ENCODE measurements at regions of chr19 and their contacts with region 1.

Region 1: GRCh38 chr19:39557441-39558151 is 17.6 kb upstream of the EID2 start:
- DNase-seq: peak in 1 of 5 donors; percentile 15
- H3K4me3 ChIP-seq: peak overlapping the region; percentile 37 to 41
- H3K4me3 Mint-ChIP-seq: peak overlapping the region; percentile 79 to 93 (median 85)
- H3K27ac ChIP-seq: peak overlapping the region; percentile 16
- H3K27ac Mint-ChIP-seq: peak overlapping the region; percentile 77 to 99 (median 96)
- H3K4me1 ChIP-seq: peaks cover 23% of the 10 kb centered on the region
- H3K4me1 Mint-ChIP-seq: peaks cover 21 to 25% (median 22%) of the 10 kb centered on the region in 4 donors
- H3K27me3 ChIP-seq: no peaks in the 10 kb centered on the region
- H3K27me3 Mint-ChIP-seq: no peaks in the 10 kb centered on the region

Region 2: DNA sequence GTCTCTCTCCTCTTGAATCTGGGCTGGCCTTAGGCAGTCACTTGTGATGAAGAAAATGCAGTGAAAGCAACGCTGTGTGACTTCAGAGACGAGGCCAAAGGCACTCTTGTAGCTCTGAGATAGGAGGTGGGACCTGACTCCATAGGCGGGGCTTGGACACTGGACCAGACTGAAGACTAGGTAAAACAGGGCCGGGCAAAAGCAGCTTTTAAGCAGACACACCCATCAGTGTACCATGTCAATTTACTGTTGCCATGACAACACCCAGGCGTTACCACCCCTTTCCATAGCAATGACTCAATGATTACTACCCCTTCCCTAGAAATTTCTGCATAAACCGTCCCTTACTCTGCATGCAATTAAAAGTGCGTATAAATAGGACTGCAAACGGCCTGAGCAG is 11.0 kb before region 1 on chr19:
- CTCF ChIA-PET with region 1: interaction called, 14 read pairs
- POLR2A ChIA-PET with region 1: interaction called, 3 read pairs
- intact Hi-C with region 1: no loop called
- DNase-seq: no peak
- H3K4me3 ChIP-seq: no peak overlapping the region
- H3K4me3 Mint-ChIP-seq: peak overlapping the region in 2 of 8 donors; percentile 30 to 32
- H3K27ac ChIP-seq: no peak overlapping the region
- H3K27ac Mint-ChIP-seq: peak overlapping the region in 4 of 7 donors; percentile 47 to 82 (median 62)
- H3K4me1 ChIP-seq: peaks cover 45% of the 10 kb centered on the region
- H3K4me1 Mint-ChIP-seq: peaks cover 25 to 50% (median 37%) of the 10 kb centered on the region in 4 donors
- H3K27me3 ChIP-seq: no peaks in the 10 kb centered on the region
- H3K27me3 Mint-ChIP-seq: peaks cover 0 to 2% of the 10 kb centered on the region in 2 donors

Region 3: GRCh38 chr19:39599116-39599515 is 41.5 kb after region 1 on chr19:
- CTCF ChIA-PET with region 1: no interaction called
- POLR2A ChIA-PET with region 1: no interaction called
- intact Hi-C with region 1: no loop called
- DNase-seq: peak in 1 of 5 donors; percentile 2
- H3K4me3 ChIP-seq: no peak overlapping the region
- H3K4me3 Mint-ChIP-seq: no peak overlapping the region
- H3K27ac ChIP-seq: no peak overlapping the region
- H3K27ac Mint-ChIP-seq: no peak overlapping the region
- H3K4me1 ChIP-seq: no peaks in the 10 kb centered on the region
- H3K4me1 Mint-ChIP-seq: no peaks in the 10 kb centered on the region
- H3K27me3 ChIP-seq: peaks cover 6% of the 10 kb centered on the region
- H3K27me3 Mint-ChIP-seq: peaks cover 35 to 41% of the 10 kb centered on the region in 2 donors

Region 4: GRCh38 chr19:39629716-39630115 is 72.1 kb after region 1 on chr19:
- CTCF ChIA-PET with region 1: interaction called, 3 read pairs
- POLR2A ChIA-PET with region 1: no interaction called
- intact Hi-C with region 1: loop called (anchors 5 kb)
- DNase-seq: no peak
- H3K4me3 ChIP-seq: no peak overlapping the region
- H3K4me3 Mint-ChIP-seq: no peak overlapping the region
- H3K27ac ChIP-seq: no peak overlapping the region
- H3K27ac Mint-ChIP-seq: no peak overlapping the region
- H3K4me1 ChIP-seq: no peaks in the 10 kb centered on the region
- H3K4me1 Mint-ChIP-seq: no peaks in the 10 kb centered on the region
- H3K27me3 ChIP-seq: no peaks in the 10 kb centered on the region
- H3K27me3 Mint-ChIP-seq: peaks cover 15 to 19% of the 10 kb centered on the region in 2 donors

Region 5: GRCh38 chr19:39765091-39766076 is 207.8 kb after region 1 on chr19:
- CTCF ChIA-PET with region 1: interaction called, 13 read pairs
- POLR2A ChIA-PET with region 1: no interaction called
- intact Hi-C with region 1: no loop called
- DNase-seq: peak in 3 of 5 donors; percentile 14 to 20 (median 16)
- H3K4me3 ChIP-seq: no peak overlapping the region
- H3K4me3 Mint-ChIP-seq: no peak overlapping the region
- H3K27ac ChIP-seq: no peak overlapping the region
- H3K27ac Mint-ChIP-seq: no peak overlapping the region
- H3K4me1 ChIP-seq: no peaks in the 10 kb centered on the region
- H3K4me1 Mint-ChIP-seq: peaks cover 0 to 1% (median 0%) of the 10 kb centered on the region in 4 donors
- H3K27me3 ChIP-seq: no peaks in the 10 kb centered on the region
- H3K27me3 Mint-ChIP-seq: peaks cover under 1 to 1% of the 10 kb centered on the region in 2 donors

Measured in CD4-positive, alpha-beta memory T cell (primary cell).